MCF 10A (cell line): ENCODE measurements at regions of chr11 and their contacts with region 1.

Region 1: GRCh38 chr11:19071255-19071654 is 10.7 kb upstream of the MRGPRX2 start:
- DNase-seq: peak; percentile 90
- H3K4me3 Mint-ChIP-seq: peak overlapping the region; percentile 26
- H3K27ac Mint-ChIP-seq: no peak overlapping the region
- H3K4me1 Mint-ChIP-seq: no peaks in the 10 kb centered on the region
- H3K27me3 Mint-ChIP-seq: peaks cover 54% of the 10 kb centered on the region
- CTCF ChIP-seq: peak; percentile 98

Region 2: GRCh38 chr11:18768472-18768901 is 302.8 kb before region 1 on chr11:
- CTCF ChIA-PET with region 1: no interaction called
- POLR2A ChIA-PET with region 1: no interaction called
- intact Hi-C with region 1: no loop called
- DNase-seq: no peak
- H3K4me3 Mint-ChIP-seq: no peak overlapping the region
- H3K27ac Mint-ChIP-seq: no peak overlapping the region
- H3K4me1 Mint-ChIP-seq: peaks cover 13% of the 10 kb centered on the region
- H3K27me3 Mint-ChIP-seq: peaks cover 28% of the 10 kb centered on the region
- CTCF ChIP-seq: no peak

Region 3: GRCh38 chr11:19060629-19061028 is 10.6 kb before region 1 on chr11 and contains the start of gene MRGPRX2:
- CTCF ChIA-PET with region 1: interaction called, 19 read pairs
- POLR2A ChIA-PET with region 1: no interaction called
- intact Hi-C with region 1: no loop called
- DNase-seq: no peak
- H3K4me3 Mint-ChIP-seq: no peak within 1 kb of the TSS
- H3K27ac Mint-ChIP-seq: no peak within 1 kb of the TSS
- H3K4me1 Mint-ChIP-seq: no peaks in the 10 kb centered on the region
- H3K27me3 Mint-ChIP-seq: peaks cover 99% of the 10 kb centered on the region
- CTCF ChIP-seq: no peak
- total RNA-seq, gene MRGPRX2: not detected in 2 replicates

Region 4: GRCh38 chr11:19160847-19161246 is 89.6 kb after region 1 on chr11:
- CTCF ChIA-PET with region 1: interaction called, 16 read pairs
- POLR2A ChIA-PET with region 1: no interaction called
- intact Hi-C with region 1: no loop called
- DNase-seq: peak; percentile 3
- H3K4me3 Mint-ChIP-seq: no peak overlapping the region
- H3K27ac Mint-ChIP-seq: no peak overlapping the region
- H3K4me1 Mint-ChIP-seq: no peaks in the 10 kb centered on the region
- H3K27me3 Mint-ChIP-seq: no peaks in the 10 kb centered on the region
- CTCF ChIP-seq: no peak

Region 5: GRCh38 chr11:19259487-19260345 is 188.5 kb after region 1 on chr11:
- CTCF ChIA-PET with region 1: interaction called, 41 read pairs
- POLR2A ChIA-PET with region 1: interaction called, 3 read pairs
- intact Hi-C with region 1: loop called (anchors 1 kb)
- DNase-seq: peak; percentile 65
- H3K4me3 Mint-ChIP-seq: peak overlapping the region; percentile 39
- H3K27ac Mint-ChIP-seq: no peak overlapping the region
- H3K4me1 Mint-ChIP-seq: no peaks in the 10 kb centered on the region
- H3K27me3 Mint-ChIP-seq: no peaks in the 10 kb centered on the region
- CTCF ChIP-seq: peak; percentile 94

Region 6: DNA sequence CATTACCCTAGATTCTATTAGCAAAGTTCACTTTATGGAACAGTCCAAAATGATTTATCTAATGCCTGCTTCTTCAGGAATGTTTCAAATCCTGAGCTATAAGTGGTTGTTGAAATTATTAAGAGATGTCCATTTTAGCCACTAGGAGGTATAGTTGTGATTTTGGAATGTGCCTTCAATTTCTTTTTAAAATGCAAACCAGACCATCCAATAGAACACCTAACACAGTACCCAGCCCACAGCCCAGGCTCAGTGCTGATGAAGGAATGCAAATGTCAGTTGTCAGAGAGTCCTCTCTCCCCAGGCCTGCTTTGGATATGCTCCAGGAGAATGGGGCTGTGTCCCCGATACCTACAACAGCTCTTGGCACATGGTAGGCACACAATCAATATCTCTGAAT is 255.2 kb after region 1 on chr11:
- CTCF ChIA-PET with region 1: interaction called, 3 read pairs
- POLR2A ChIA-PET with region 1: no interaction called
- intact Hi-C with region 1: loop called (anchors 1 kb)
- DNase-seq: peak; percentile 41
- H3K4me3 Mint-ChIP-seq: no peak overlapping the region
- H3K27ac Mint-ChIP-seq: no peak overlapping the region
- H3K4me1 Mint-ChIP-seq: no peaks in the 10 kb centered on the region
- H3K27me3 Mint-ChIP-seq: peaks cover 80% of the 10 kb centered on the region
- CTCF ChIP-seq: peak; percentile 29